ENCODE measurements at regions of chr10 and their contacts with region 1.

Region 1: GRCh38 chr10:86521678-86522509 is at the start of gene WAPL:
- DNase-seq: peak; percentile 92 to 98
- H3K4me3 ChIP-seq: peak within 1 kb of the TSS; percentile 99
- H3K4me3 Mint-ChIP-seq: peak within 1 kb of the TSS; percentile 98
- H3K27ac Mint-ChIP-seq: peak within 1 kb of the TSS; percentile 94
- H3K4me1 ChIP-seq: peaks cover 16% of the 10 kb centered on the region
- H3K4me1 Mint-ChIP-seq: peaks cover 16% of the 10 kb centered on the region
- H3K27me3 ChIP-seq: no peaks in the 10 kb centered on the region
- H3K27me3 Mint-ChIP-seq: no peaks in the 10 kb centered on the region
- CTCF ChIP-seq: no peak
- total RNA-seq, gene WAPL: 48.4 and 49.2 TPM in 2 replicates

Region 2: GRCh38 chr10:86472061-86472460 is 49.8 kb before region 1 on chr10:
- CTCF ChIA-PET with region 1: no interaction called
- POLR2A ChIA-PET with region 1: no interaction called
- intact Hi-C with region 1: loop called (anchors 2 kb)
- DNase-seq: no peak
- H3K4me3 ChIP-seq: no peak overlapping the region
- H3K4me3 Mint-ChIP-seq: no peak overlapping the region
- H3K27ac Mint-ChIP-seq: no peak overlapping the region
- H3K4me1 ChIP-seq: peaks cover 14% of the 10 kb centered on the region
- H3K4me1 Mint-ChIP-seq: peaks cover 8% of the 10 kb centered on the region
- H3K27me3 ChIP-seq: no peaks in the 10 kb centered on the region
- H3K27me3 Mint-ChIP-seq: no peaks in the 10 kb centered on the region
- CTCF ChIP-seq: no peak

Region 3: DNA sequence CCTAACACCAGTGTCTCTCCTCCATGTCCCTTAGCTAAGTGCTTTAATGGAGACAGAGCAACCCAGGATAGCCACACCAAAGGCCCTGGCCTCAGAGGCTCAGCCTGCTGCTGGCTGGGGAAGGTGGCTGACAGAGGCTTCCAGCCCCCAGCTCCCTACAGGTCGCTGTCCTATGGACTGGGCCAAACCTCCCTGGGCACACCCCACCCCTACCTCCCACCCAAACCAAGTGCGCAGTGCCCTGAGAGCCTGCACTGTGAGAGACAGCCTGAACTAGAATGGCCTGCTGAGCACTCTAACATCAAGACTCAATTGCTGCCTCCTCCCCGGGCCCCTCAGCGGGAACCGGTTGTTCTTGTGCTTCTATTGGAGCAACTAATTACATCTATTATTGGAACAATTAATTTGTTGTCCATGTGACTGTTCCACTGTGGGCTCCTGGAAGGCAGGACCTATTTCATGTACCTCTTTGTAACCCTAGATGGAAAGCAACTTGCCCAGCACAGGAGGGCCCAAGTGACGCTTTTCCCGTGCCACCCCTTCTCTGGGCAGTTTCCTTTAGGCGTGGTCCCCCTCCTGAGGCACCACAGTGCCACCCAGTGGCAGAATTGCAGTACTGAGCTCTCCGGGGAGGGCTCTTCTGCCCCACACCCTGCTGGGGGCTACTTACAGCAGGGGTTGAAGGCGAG is 63.3 kb after region 1 on chr10:
- CTCF ChIA-PET with region 1: interaction called, 8 read pairs
- POLR2A ChIA-PET with region 1: no interaction called
- intact Hi-C with region 1: loop called (anchors 1 kb)
- DNase-seq: peak; percentile 68 to 81
- H3K4me3 ChIP-seq: no peak overlapping the region
- H3K4me3 Mint-ChIP-seq: no peak overlapping the region
- H3K27ac Mint-ChIP-seq: no peak overlapping the region
- H3K4me1 ChIP-seq: no peaks in the 10 kb centered on the region
- H3K4me1 Mint-ChIP-seq: no peaks in the 10 kb centered on the region
- H3K27me3 ChIP-seq: no peaks in the 10 kb centered on the region
- H3K27me3 Mint-ChIP-seq: no peaks in the 10 kb centered on the region
- CTCF ChIP-seq: peak; percentile 94

Region 4: DNA sequence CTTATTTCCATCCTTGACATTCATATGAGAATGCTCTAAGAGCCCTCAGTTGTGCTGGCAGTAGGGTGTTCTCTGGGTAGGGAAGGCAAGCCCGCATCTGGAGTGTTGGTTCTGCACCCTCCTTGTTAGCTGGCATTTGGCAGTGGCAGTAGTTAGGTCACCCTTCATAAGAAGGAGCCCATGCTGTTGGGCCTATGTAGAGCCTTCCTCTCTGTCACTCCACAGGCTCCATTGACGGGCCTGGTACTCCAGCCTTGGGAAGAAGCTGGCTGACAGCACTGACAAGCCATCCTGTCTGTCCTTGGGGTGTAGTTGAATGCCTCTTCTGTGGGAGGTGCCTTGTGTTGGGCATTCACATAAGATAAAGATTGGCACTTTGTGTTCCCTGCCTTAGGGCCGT is 324.2 kb after region 1 on chr10:
- CTCF ChIA-PET with region 1: no interaction called
- POLR2A ChIA-PET with region 1: no interaction called
- intact Hi-C with region 1: no loop called
- DNase-seq: no peak
- H3K4me3 ChIP-seq: no peak overlapping the region
- H3K4me3 Mint-ChIP-seq: no peak overlapping the region
- H3K27ac Mint-ChIP-seq: no peak overlapping the region
- H3K4me1 ChIP-seq: no peaks in the 10 kb centered on the region
- H3K4me1 Mint-ChIP-seq: peaks cover 10% of the 10 kb centered on the region
- H3K27me3 ChIP-seq: no peaks in the 10 kb centered on the region
- H3K27me3 Mint-ChIP-seq: no peaks in the 10 kb centered on the region
- CTCF ChIP-seq: no peak